OCI-LY7 (cell line): ENCODE measurements at regions of chr10 and their contacts with region 1.

Region 1: GRCh38 chr10:11573497-11573896 is 38.0 kb downstream of the USP6NL start:
- DNase-seq: peak; percentile 67
- H3K4me3 ChIP-seq: peak overlapping the region; percentile 21
- H3K27ac ChIP-seq: peak overlapping the region; percentile 55
- H3K4me1 ChIP-seq: peaks cover 51% of the 10 kb centered on the region
- CTCF ChIP-seq: no peak

Region 2: DNA sequence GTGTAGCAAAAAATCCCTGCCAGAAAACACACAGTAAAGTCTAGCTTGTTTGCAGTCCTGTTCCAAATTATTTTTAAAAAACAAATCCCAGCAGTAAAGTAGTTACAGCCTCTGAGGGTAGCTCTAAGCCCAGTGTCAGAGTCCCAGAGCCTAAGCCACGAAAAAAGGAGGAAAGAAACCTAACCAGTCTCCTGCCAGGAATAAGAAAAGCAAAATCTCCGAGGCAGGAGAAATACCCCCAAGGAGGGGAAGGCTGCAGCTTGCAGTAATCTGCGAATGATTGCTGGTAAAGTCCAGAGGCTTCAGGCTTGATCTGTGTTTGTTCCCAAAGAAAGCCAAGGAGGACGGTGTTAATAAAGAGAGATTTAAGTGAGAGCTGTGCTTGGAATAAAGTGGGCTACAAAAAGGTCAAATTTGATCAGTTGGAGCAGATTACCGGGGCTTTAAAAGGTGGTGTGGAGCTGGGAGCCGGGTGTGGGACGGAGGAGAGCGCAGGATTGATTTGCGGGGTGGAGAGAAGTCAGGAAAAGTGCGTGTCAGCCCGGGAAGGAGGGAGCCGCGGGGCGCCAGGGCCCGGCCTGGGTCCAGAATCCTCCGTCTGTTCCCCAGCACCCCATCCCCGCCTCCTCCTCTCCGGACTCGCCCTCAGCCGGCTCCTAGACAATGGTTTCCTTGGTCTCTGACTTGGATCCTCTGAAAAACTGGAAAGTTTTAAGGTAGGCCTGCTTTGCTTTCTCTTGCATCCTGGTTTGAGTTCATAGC is 775.2 kb before region 1 on chr10:
- CTCF ChIA-PET with region 1: no interaction called
- POLR2A ChIA-PET with region 1: no interaction called
- intact Hi-C with region 1: no loop called
- DNase-seq: no peak
- H3K4me3 ChIP-seq: no peak overlapping the region
- H3K27ac ChIP-seq: no peak overlapping the region
- H3K4me1 ChIP-seq: no peaks in the 10 kb centered on the region
- CTCF ChIP-seq: no peak

Region 3: DNA sequence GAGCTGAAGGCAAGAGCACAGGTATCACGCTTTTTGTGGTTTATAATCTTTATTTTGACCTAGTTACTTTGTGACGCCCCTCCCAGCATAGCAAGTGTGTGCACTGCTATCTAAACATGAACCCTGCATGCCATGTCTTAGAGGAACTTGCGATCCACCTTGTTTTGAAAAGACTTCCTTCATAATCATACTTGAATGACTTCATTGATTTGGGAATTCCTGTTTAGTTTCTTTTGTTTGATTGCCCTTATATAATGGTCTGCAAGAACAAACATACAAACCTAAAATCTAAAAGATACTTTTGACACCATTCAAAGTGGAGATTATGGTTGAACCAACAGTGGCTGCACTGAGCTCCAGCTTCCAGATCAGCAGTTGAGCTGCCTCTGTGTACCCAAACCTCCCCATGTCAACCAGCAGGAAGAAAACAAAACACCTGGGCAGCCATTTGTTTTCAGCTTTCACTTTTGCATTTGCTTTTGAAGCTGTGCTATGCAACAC is 423.2 kb before region 1 on chr10:
- CTCF ChIA-PET with region 1: no interaction called
- POLR2A ChIA-PET with region 1: no interaction called
- intact Hi-C with region 1: no loop called
- DNase-seq: no peak
- H3K4me3 ChIP-seq: no peak overlapping the region
- H3K27ac ChIP-seq: no peak overlapping the region
- H3K4me1 ChIP-seq: peaks cover 9% of the 10 kb centered on the region
- CTCF ChIP-seq: no peak

Region 4: GRCh38 chr10:11165591-11166543 is 407.6 kb before region 1 on chr10:
- CTCF ChIA-PET with region 1: no interaction called
- POLR2A ChIA-PET with region 1: no interaction called
- intact Hi-C with region 1: no loop called
- DNase-seq: peak; percentile 77
- H3K4me3 ChIP-seq: peak overlapping the region; percentile 70
- H3K27ac ChIP-seq: no peak overlapping the region
- H3K4me1 ChIP-seq: peaks cover 44% of the 10 kb centered on the region
- CTCF ChIP-seq: peak; percentile 76

Region 5: GRCh38 chr10:11560076-11560709 is 13.3 kb before region 1 on chr10:
- CTCF ChIA-PET with region 1: interaction called, 5 read pairs
- POLR2A ChIA-PET with region 1: interaction called, 21 read pairs
- intact Hi-C with region 1: no loop called
- DNase-seq: peak; percentile 74
- H3K4me3 ChIP-seq: peak overlapping the region; percentile 22
- H3K27ac ChIP-seq: peak overlapping the region; percentile 30
- H3K4me1 ChIP-seq: peaks cover 51% of the 10 kb centered on the region
- CTCF ChIP-seq: no peak

Region 6: DNA sequence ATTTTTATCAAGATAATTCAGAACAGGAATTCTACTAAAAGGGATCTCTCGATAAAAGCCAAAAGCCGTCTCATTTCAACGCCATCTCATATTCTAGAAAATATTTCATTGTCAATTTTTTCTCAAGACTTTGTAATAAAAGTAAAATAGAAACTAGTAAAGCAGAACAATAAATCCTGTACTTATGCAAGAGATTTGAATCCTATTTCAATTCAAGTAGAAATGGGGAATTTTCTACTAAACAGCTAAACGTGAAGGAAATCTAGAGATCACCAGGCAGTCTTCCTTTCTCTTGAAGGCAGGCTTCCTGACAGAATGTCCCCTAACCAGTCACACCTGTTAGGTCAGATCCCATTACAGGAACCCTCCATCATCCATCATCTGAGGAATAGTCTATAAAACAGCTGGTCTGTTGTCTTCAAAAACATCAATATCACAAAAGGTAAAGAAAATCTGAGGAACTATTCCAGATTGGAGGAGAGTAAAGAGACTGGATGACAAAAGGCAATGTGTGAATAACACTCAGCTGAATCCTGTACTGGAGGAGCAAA is 14.3 kb after region 1 on chr10:
- CTCF ChIA-PET with region 1: no interaction called
- POLR2A ChIA-PET with region 1: interaction called, 16 read pairs
- intact Hi-C with region 1: no loop called
- DNase-seq: no peak
- H3K4me3 ChIP-seq: no peak overlapping the region
- H3K27ac ChIP-seq: no peak overlapping the region
- H3K4me1 ChIP-seq: peaks cover 21% of the 10 kb centered on the region
- CTCF ChIP-seq: no peak

Region 7: DNA sequence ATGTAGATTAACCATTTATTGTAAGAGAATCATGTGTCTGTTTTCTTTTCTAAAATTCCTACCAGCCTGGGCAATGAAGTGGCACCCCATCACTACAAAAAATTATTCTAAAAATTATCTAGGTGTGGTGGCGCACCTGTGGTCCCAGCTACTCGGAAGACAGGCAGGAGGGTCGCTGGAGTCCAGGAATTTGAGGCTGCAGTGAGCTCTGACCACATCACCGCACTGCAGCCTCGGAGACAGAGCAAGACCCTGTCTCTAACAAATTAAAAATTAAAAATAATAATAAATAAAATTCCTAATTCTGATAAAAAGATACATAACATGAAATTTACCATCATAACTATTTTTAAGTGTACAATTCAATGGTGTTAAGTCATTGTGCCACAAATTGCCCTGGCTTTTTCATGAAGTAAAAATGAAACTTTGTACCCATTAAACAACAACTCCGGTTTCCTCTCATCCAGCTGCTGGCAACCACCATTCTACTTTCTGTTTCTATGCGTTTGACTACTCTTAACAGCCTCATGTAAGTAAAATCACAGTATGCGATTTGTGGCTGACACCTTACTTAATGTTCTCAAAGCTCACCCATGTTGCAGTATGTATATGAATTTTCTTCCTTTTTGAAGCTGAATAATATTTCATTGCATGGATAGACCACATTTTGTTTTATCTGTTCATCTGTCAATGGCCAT is 58.5 kb after region 1 on chr10:
- CTCF ChIA-PET with region 1: no interaction called
- POLR2A ChIA-PET with region 1: no interaction called
- intact Hi-C with region 1: no loop called
- DNase-seq: peak; percentile 81
- H3K4me3 ChIP-seq: peak overlapping the region; percentile 49
- H3K27ac ChIP-seq: peak overlapping the region; percentile 75
- H3K4me1 ChIP-seq: peaks cover 43% of the 10 kb centered on the region
- CTCF ChIP-seq: no peak; the same call in 1 of the 2 replicates